ENCODE measurements at regions of chr12 and their contacts with region 1.

Region 1: GRCh38 chr12:51172515-51173431 is at the start of gene TFCP2:
- DNase-seq: peak; percentile 85 to 98 (median 90)
- ATAC-seq: peak; percentile 98
- H3K4me3 ChIP-seq: peak within 1 kb of the TSS; percentile 91
- H3K4me3 Mint-ChIP-seq: peak within 1 kb of the TSS; percentile 87
- H3K27ac ChIP-seq: peak within 1 kb of the TSS; percentile 91 to 96
- H3K27ac Mint-ChIP-seq: no peak within 1 kb of the TSS
- H3K4me1 ChIP-seq: peaks cover 34% of the 10 kb centered on the region
- H3K4me1 Mint-ChIP-seq: peaks cover 18% of the 10 kb centered on the region
- H3K27me3 ChIP-seq: no peaks in the 10 kb centered on the region
- H3K27me3 Mint-ChIP-seq: no peaks in the 10 kb centered on the region
- CTCF ChIP-seq: no peak
- total RNA-seq, gene TFCP2: 9.4 to 11.7 TPM

Region 2: DNA sequence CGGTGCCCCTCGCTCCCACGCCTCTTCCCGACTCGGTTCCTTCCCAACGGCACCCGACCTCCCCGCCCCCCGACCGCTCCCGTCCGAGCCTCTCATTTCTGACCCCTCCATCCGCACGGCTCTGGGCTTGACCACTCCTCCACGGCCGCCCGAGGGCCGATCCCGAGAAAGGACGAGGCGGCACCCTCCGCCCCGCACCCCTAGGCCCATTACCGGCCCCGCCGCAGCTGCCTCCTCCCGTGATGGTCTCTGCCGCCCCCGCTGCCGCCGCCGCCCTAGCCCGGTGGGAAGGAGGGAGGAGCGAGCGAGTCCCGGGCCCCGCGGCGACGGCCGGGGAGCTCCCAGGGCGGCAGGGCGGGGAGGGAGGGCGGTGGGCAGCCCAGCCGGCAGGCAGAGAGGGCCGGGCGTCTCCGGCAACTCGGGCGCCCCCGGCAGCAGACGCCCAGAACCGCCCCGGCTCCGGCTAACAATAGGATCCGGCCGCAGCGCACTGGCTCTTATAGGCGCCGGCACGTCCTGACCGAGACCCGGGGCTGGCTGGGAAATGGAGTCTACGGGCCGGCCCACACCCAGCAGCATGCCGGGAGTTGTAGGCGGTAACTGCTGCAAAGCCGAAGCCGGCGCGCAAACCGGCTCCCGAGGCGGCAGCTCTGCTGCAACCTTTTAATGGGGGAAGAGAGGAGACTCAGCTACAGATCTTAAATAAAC is 89.5 kb before region 1 on chr12 and contains the start of gene CSRNP2:
- CTCF ChIA-PET with region 1: no interaction called
- POLR2A ChIA-PET with region 1: no interaction called
- intact Hi-C with region 1: loop called in 1 of 2 experiments (anchors 2 kb)
- DNase-seq: peak; percentile 92 to 97 (median 94)
- ATAC-seq: peak; percentile 99
- H3K4me3 ChIP-seq: peak within 1 kb of the TSS; percentile 84
- H3K4me3 Mint-ChIP-seq: peak within 1 kb of the TSS; percentile 95
- H3K27ac ChIP-seq: peak within 1 kb of the TSS; percentile 40 to 71
- H3K27ac Mint-ChIP-seq: peak within 1 kb of the TSS; percentile 87
- H3K4me1 ChIP-seq: peaks cover 20% of the 10 kb centered on the region
- H3K4me1 Mint-ChIP-seq: peaks cover 41% of the 10 kb centered on the region
- H3K27me3 ChIP-seq: no peaks in the 10 kb centered on the region
- H3K27me3 Mint-ChIP-seq: no peaks in the 10 kb centered on the region
- CTCF ChIP-seq: peak; percentile 34
- total RNA-seq, gene CSRNP2: 14.4 to 16.5 TPM

Measured in CD4-positive, alpha-beta T cell (primary cell).